MCF 10A (cell line): ENCODE measurements at regions of chr15 and their contacts with region 1.

Region 1: DNA sequence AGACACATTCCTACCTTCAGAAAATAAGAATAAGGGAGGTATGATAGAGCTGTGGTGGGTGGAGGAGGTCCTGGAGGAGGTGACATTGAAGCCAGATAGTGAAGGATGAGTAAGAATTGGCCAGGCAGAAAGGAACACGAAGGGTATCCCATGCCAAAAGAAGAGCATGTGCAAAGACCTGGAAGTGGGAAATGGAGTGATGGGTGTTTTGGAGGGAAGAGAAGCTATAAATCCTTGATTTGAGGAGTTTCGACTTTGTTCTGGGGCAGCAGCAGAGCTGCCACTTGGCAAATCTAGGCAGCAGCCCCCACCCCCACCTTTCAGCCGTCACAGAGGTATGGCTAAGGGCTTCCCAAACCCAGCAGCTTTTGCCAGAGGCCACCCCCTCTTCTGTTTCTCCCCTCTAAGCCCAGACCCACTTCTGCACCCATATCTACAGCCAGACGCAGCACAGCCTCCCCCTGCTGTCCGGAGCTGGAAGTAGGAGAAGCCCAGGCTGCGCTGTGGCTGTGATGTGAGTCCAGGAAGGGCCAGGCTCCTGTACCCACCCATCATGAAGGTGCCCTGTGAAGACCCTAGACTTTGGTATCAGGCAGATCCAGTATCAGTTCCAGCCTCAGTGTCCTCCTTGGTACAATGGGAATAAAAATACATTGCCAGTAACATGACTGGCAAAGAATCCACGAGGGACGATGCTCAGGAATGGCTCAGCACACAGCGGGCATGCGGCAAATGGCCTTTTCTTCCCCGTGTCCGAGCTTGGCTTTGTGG is 188.7 kb upstream of the LINGO1 start:
- DNase-seq: peak; percentile 58
- H3K4me3 Mint-ChIP-seq: no peak overlapping the region
- H3K27ac Mint-ChIP-seq: no peak overlapping the region
- H3K4me1 Mint-ChIP-seq: no peaks in the 10 kb centered on the region
- H3K27me3 Mint-ChIP-seq: peaks cover 41% of the 10 kb centered on the region
- CTCF ChIP-seq: peak; percentile 80

Region 2: GRCh38 chr15:77633134-77633912 is 188.1 kb before region 1 on chr15:
- CTCF ChIA-PET with region 1: interaction called, 64 read pairs
- POLR2A ChIA-PET with region 1: interaction called, 4 read pairs
- intact Hi-C with region 1: loop called (anchors 1 kb)
- DNase-seq: peak; percentile 84
- H3K4me3 Mint-ChIP-seq: peak overlapping the region; percentile 57
- H3K27ac Mint-ChIP-seq: no peak overlapping the region
- H3K4me1 Mint-ChIP-seq: peaks cover 4% of the 10 kb centered on the region
- H3K27me3 Mint-ChIP-seq: peaks cover 65% of the 10 kb centered on the region
- CTCF ChIP-seq: peak; percentile 99

Region 3: DNA sequence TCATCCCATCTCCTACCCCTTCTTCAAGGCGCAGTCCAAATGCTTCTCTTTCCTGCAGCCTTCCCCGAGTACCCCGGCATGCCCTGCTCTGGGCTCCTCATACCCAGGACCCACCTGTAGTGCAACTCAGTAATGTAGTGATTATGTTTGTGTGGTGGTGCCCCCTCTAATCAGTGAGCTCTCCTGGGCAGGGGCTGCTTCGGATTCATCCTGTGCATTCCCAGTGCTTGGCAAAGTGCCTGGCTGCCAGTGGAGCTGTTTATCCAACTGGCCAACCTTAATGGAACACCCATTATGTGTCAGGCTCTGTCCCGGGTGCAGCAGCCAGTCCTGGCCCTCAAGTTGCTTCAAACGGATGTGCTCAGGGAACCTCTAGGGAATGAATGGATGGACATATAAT is 14.3 kb before region 1 on chr15:
- CTCF ChIA-PET with region 1: interaction called, 12 read pairs
- POLR2A ChIA-PET with region 1: no interaction called
- intact Hi-C with region 1: no loop called
- DNase-seq: no peak
- H3K4me3 Mint-ChIP-seq: no peak overlapping the region
- H3K27ac Mint-ChIP-seq: no peak overlapping the region
- H3K4me1 Mint-ChIP-seq: no peaks in the 10 kb centered on the region
- H3K27me3 Mint-ChIP-seq: peaks cover 11% of the 10 kb centered on the region
- CTCF ChIP-seq: no peak

Region 4: GRCh38 chr15:77831986-77832385 is 10.6 kb after region 1 on chr15:
- CTCF ChIA-PET with region 1: interaction called, 14 read pairs
- POLR2A ChIA-PET with region 1: no interaction called
- intact Hi-C with region 1: no loop called
- DNase-seq: no peak
- H3K4me3 Mint-ChIP-seq: no peak overlapping the region
- H3K27ac Mint-ChIP-seq: no peak overlapping the region
- H3K4me1 Mint-ChIP-seq: no peaks in the 10 kb centered on the region
- H3K27me3 Mint-ChIP-seq: peaks cover 13% of the 10 kb centered on the region
- CTCF ChIP-seq: no peak

Region 5: GRCh38 chr15:77838061-77838460 is 16.7 kb after region 1 on chr15:
- CTCF ChIA-PET with region 1: interaction called, 11 read pairs
- POLR2A ChIA-PET with region 1: no interaction called
- intact Hi-C with region 1: no loop called
- DNase-seq: peak; percentile 27
- H3K4me3 Mint-ChIP-seq: no peak overlapping the region
- H3K27ac Mint-ChIP-seq: no peak overlapping the region
- H3K4me1 Mint-ChIP-seq: peaks cover 23% of the 10 kb centered on the region
- H3K27me3 Mint-ChIP-seq: peaks cover 41% of the 10 kb centered on the region
- CTCF ChIP-seq: no peak